AG04450 (cell line): ENCODE measurements at regions of chr5 and their contacts with region 1.

Region 1: GRCh38 chr5:82351754-82352145 is 73.6 kb upstream of the RPS23 start:
- DNase-seq: peak; percentile 53
- H3K4me3 ChIP-seq: no peak overlapping the region
- H3K27ac ChIP-seq: no peak overlapping the region
- H3K27me3 ChIP-seq: no peaks in the 10 kb centered on the region
- CTCF ChIP-seq: peak; percentile 78

Region 2: DNA sequence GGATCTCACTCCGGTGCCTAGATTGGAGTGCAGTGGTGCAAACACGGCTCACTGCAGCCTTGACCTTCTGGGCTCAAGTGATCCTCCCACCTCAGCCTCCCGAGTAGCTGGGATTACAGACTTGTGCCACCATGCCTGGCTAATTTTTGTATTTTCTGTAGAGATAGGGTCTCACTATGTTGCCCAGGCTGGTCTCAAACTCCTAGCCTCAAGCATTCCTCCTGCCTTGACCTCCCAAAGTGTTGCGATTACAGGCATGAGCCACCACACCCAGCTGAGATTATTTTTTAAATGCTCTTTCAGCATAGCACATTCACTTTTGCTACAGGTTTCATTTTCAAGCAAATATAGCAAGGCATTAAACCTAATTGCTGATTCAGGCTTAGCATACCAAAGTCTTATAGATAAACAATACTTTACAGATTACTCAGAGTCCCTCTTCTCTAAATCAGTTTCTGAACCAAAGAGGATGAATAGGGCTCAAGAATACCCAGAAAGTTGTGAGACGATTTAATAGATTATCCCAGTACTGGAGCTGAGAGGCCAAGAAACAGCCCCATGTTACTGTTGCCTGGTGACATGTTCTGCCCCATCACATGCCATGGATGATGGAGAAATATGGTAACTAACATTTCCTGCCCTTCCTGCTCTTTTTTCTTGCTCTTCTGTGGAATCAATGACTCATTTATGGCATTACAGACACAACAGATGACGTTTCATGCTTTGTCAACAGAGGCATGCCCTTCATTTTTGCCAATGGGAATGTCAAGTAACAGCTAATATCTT is 582.9 kb before region 1 on chr5:
- CTCF ChIA-PET with region 1: no interaction called
- POLR2A ChIA-PET with region 1: no interaction called
- DNase-seq: peak; percentile 43
- H3K4me3 ChIP-seq: no peak overlapping the region
- H3K27ac ChIP-seq: peak overlapping the region; percentile 62
- H3K27me3 ChIP-seq: no peaks in the 10 kb centered on the region
- CTCF ChIP-seq: no peak

Region 3: GRCh38 chr5:82312373-82312856 is 39.3 kb before region 1 on chr5:
- CTCF ChIA-PET with region 1: interaction called, 57 read pairs
- POLR2A ChIA-PET with region 1: no interaction called
- DNase-seq: peak; percentile 69
- H3K4me3 ChIP-seq: no peak overlapping the region
- H3K27ac ChIP-seq: no peak overlapping the region
- H3K27me3 ChIP-seq: no peaks in the 10 kb centered on the region
- CTCF ChIP-seq: peak; percentile 98

Region 4: GRCh38 chr5:82334856-82335255 is 16.9 kb before region 1 on chr5:
- CTCF ChIA-PET with region 1: interaction called, 11 read pairs
- POLR2A ChIA-PET with region 1: interaction called, 3 read pairs
- DNase-seq: peak; percentile 81
- H3K4me3 ChIP-seq: no peak overlapping the region
- H3K27ac ChIP-seq: peak overlapping the region; percentile 90
- H3K27me3 ChIP-seq: no peaks in the 10 kb centered on the region
- CTCF ChIP-seq: no peak

Region 5: DNA sequence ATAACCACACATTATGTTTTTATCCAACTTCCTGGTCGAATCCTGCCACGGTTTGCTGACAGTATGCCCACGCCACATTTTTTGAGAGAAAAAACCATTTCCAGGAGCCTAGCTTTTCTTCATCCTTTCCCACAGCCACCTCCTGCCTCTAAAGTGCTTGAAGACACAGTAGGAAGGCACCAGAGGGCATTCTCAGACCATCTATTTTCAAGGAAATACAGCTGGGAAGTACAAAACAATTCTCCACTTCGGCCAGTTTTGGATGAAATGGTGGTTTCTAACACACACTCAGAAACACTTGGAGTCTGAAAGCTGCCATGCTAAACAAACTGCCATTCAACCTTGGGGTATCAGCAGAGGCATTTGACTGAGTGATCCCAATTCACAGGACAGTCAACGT is 12.7 kb after region 1 on chr5:
- CTCF ChIA-PET with region 1: interaction called, 24 read pairs
- POLR2A ChIA-PET with region 1: no interaction called
- DNase-seq: no peak
- H3K4me3 ChIP-seq: no peak overlapping the region
- H3K27ac ChIP-seq: no peak overlapping the region
- H3K27me3 ChIP-seq: no peaks in the 10 kb centered on the region
- CTCF ChIP-seq: peak; percentile 59

Region 6: GRCh38 chr5:82641331-82642003 is 289.7 kb after region 1 on chr5:
- CTCF ChIA-PET with region 1: interaction called, 17 read pairs
- POLR2A ChIA-PET with region 1: no interaction called
- DNase-seq: peak; percentile 65
- H3K4me3 ChIP-seq: no peak overlapping the region
- H3K27ac ChIP-seq: no peak overlapping the region
- H3K27me3 ChIP-seq: no peaks in the 10 kb centered on the region
- CTCF ChIP-seq: peak; percentile 76

Region 7: DNA sequence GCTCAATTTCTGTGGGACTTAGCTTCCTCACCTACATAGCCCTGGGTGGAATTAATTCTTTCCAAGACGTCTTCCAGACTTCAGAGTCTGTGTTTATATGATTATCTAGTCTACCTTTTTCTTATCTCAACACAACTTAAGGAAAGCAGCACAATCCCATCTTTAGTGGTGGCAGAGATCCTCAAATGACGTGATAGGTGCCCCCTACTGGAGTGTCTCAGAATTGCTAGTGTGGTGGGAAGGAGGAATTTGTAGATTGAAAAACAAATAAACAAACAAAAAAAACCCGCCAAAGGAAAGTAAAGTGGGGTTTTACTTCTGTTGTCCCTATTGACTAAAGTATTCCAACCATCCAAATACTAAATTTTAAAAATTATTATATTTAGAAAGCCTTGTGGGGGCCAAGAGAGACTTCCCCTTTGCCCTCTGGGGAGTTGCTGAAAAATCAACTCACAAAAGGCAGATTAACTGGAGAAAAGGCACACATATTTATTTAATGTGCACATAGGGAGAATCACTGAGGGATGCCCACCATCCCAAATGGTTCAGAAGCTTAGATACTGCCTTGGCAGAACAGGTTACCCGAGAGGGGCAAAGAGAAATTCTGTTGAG is 442.2 kb after region 1 on chr5:
- CTCF ChIA-PET with region 1: interaction called, 17 read pairs
- POLR2A ChIA-PET with region 1: no interaction called
- DNase-seq: no peak
- H3K4me3 ChIP-seq: no peak overlapping the region
- H3K27ac ChIP-seq: no peak overlapping the region
- H3K27me3 ChIP-seq: no peaks in the 10 kb centered on the region
- CTCF ChIP-seq: peak; percentile 66

Region 8: DNA sequence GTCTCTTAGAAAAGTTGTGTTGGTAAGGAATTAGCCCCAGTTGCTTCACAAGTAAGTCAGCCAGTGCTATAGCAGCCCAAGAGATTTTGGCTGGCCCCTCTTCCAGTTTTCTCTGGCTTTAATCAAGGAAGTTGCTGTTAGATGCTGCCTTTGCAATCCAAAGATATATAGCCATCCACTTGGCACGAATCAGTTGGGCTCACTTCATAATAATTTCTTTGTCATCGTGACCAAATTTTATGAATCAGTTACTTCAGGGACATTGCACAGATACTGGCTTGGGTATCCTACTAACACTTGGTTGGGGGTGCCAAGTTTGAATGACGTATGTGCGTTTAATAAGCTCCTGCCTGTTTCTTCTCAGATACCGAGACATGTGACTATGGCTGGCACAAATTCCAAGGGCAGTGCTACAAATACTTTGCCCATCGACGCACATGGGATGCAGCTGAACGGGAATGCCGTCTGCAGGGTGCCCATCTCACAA is 1201.3 kb after region 1 on chr5:
- CTCF ChIA-PET with region 1: interaction called, 11 read pairs
- POLR2A ChIA-PET with region 1: no interaction called
- DNase-seq: no peak
- H3K4me3 ChIP-seq: no peak overlapping the region
- H3K27ac ChIP-seq: no peak overlapping the region
- H3K27me3 ChIP-seq: no peaks in the 10 kb centered on the region
- CTCF ChIP-seq: no peak